MCF 10A (cell line): ENCODE measurements at regions of chr9 and their contacts with region 1.

Region 1: GRCh38 chr9:130780865-130781504 is 54.1 kb upstream of the ABL1 start:
- DNase-seq: peak; percentile 96
- H3K4me3 Mint-ChIP-seq: peak overlapping the region; percentile 62
- H3K27ac Mint-ChIP-seq: peak overlapping the region; percentile 96
- H3K4me1 Mint-ChIP-seq: peaks cover 32% of the 10 kb centered on the region
- H3K27me3 Mint-ChIP-seq: no peaks in the 10 kb centered on the region
- CTCF ChIP-seq: no peak

Region 2: GRCh38 chr9:130794923-130795495 is 14.0 kb after region 1 on chr9:
- CTCF ChIA-PET with region 1: no interaction called
- POLR2A ChIA-PET with region 1: interaction called, 47 read pairs
- intact Hi-C with region 1: no loop called
- DNase-seq: no peak
- H3K4me3 Mint-ChIP-seq: no peak overlapping the region
- H3K27ac Mint-ChIP-seq: peak overlapping the region; percentile 70
- H3K4me1 Mint-ChIP-seq: peaks cover 13% of the 10 kb centered on the region
- H3K27me3 Mint-ChIP-seq: no peaks in the 10 kb centered on the region
- CTCF ChIP-seq: no peak

Region 3: DNA sequence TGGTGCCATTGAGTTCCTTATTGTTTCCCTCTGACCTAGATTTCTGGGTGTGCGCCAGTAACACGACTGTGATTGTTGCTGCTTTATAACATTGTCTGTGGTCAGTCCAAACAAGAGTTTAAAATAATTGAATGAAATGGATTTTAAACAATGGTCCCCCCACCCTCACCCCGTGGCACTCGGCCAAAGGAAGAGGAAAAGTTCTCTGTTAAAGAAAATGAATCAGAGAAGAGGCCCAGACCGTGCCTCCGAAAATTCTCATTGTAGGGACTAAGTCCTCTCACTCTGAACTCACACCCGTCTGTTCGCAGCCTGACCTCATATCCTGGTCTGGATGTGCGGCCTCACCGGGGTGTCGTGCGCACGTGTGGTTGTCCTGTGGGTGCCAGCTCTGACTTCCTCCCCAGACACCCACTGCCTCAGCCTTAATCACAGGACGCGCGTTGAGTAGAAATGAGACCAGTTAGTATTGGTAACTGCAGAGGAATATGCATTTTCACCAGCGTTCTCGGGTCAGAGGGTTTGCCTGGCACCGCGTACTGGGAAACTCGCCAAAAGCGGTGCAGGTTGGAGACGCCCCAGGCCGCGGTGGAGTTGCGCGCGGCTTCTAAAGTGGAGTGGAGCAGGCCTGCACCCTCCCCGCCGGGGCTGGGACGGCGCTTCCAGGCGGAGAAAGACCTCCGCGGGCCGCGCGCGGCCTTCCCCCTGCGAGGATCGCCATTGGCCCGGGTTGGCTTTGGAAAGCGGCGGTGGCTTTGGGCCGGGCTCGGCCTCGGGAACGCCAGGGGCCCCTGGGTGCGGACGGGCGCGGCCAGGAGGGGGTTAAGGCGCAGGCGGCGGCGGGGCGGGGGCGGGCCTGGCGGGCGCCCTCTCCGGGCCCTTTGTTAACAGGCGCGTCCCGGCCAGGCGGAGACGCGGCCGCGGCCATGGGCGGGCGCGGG is 53.7 kb after region 1 on chr9 and contains the start of gene ABL1:
- CTCF ChIA-PET with region 1: interaction called, 3 read pairs
- POLR2A ChIA-PET with region 1: interaction called, 76 read pairs
- intact Hi-C with region 1: loop called (anchors 2 kb)
- DNase-seq: peak; percentile 89
- H3K4me3 Mint-ChIP-seq: peak within 1 kb of the TSS; percentile 90
- H3K27ac Mint-ChIP-seq: peak within 1 kb of the TSS; percentile 99
- H3K4me1 Mint-ChIP-seq: peaks cover 47% of the 10 kb centered on the region
- H3K27me3 Mint-ChIP-seq: no peaks in the 10 kb centered on the region
- CTCF ChIP-seq: no peak
- total RNA-seq, gene ABL1: 67.5 TPM in 2 replicates

Region 4: GRCh38 chr9:130847327-130848217 is 66.6 kb after region 1 on chr9:
- CTCF ChIA-PET with region 1: interaction called, 6 read pairs
- POLR2A ChIA-PET with region 1: interaction called, 25 read pairs
- intact Hi-C with region 1: loop called (anchors 1 kb)
- DNase-seq: peak; percentile 98
- H3K4me3 Mint-ChIP-seq: peak overlapping the region; percentile 59
- H3K27ac Mint-ChIP-seq: peak overlapping the region; percentile 90
- H3K4me1 Mint-ChIP-seq: peaks cover 53% of the 10 kb centered on the region
- H3K27me3 Mint-ChIP-seq: no peaks in the 10 kb centered on the region
- CTCF ChIP-seq: no peak